PC-3 (cell line): ENCODE measurements at regions of chr7 and their contacts with region 1.

Region 1: DNA sequence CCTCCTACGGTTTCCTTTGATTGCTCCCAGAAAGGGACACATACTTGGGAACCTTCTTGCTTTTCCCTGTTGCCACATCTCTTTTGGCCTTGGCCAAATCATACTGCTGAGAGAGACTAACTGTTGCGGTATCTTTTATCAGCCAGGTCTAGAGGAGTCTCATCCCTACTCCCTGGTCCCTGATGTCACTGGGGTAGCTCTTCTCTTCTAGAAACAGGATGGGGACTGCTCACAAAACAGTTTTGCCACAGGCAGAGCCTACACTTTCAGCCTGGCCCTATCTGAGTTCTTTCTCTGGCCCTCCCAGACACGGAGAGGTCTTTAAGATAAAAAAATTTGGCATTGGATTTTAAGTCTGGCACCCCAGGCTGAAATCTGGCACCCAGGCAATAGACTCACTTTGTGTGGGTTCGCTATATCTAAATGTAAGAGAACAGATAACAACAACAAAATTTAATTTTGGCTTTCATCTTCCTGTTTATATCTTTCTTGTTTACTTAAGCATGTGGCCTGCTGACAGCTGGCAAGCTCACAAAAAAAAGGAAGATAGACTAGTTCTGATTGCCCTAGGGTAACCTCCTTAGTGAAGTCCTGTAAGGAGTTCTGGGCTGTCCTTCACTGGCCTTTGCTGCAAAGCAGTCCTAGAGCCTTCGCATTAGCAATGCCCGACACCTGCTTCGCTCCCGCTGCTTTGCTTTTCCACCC is 228.3 kb upstream of the NPVF start:
- DNase-seq: no peak
- ATAC-seq: no peak
- H3K4me3 ChIP-seq: no peak overlapping the region
- H3K27ac ChIP-seq: no peak overlapping the region
- H3K4me1 ChIP-seq: no peaks in the 10 kb centered on the region
- H3K27me3 ChIP-seq: peaks cover 44% of the 10 kb centered on the region; the same call in 1 of the 2 replicates
- CTCF ChIP-seq: no peak

Region 2: DNA sequence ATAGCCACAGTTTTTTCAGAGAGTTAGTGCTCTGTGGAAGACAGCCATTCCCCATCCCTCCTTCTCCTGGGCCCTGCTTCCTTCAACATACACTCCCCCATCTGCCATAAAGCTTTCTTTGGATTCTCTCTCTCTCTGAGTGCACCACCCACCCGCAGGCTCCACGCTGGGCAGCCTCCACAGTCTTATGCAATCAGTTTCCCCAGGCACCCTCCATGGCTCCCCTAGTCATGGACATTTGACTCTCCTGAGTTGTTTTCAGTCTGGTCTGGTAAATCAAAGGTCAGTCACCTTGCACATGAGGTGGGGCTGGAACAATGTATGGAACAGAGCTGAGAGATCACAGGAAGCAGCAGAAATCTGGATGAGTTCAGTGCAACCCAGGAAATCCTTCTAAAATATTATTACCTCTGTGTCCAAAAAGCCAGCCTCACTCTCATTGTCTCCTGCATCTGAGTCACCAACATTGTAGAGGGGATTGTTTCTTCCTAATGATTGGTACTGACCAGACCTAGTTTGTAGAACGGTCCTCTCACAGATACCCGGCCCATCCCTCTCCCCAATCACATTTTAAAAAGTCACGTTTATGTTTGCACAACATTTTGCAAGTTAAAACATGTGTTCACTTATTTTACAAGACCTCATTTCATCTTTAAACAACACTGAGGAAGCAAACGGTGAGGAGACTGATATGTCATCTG is 401.6 kb before region 1 on chr7:
- CTCF ChIA-PET with region 1: no interaction called
- POLR2A ChIA-PET with region 1: no interaction called
- intact Hi-C with region 1: no loop called
- DNase-seq: no peak
- ATAC-seq: no peak
- H3K4me3 ChIP-seq: no peak overlapping the region
- H3K27ac ChIP-seq: no peak overlapping the region
- H3K4me1 ChIP-seq: no peaks in the 10 kb centered on the region
- H3K27me3 ChIP-seq: no peaks in the 10 kb centered on the region
- CTCF ChIP-seq: no peak

Region 3: GRCh38 chr7:25430200-25430931 is 26.3 kb before region 1 on chr7:
- CTCF ChIA-PET with region 1: no interaction called
- POLR2A ChIA-PET with region 1: interaction called, 12 read pairs
- intact Hi-C with region 1: no loop called
- DNase-seq: no peak
- ATAC-seq: no peak
- H3K4me3 ChIP-seq: no peak overlapping the region
- H3K27ac ChIP-seq: no peak overlapping the region
- H3K4me1 ChIP-seq: no peaks in the 10 kb centered on the region
- H3K27me3 ChIP-seq: peaks cover 88% of the 10 kb centered on the region
- CTCF ChIP-seq: no peak